ENCODE measurements at regions of chr3 and their contacts with region 1.

Region 1: GRCh38 chr3:42387802-42388651 is 22.4 kb downstream of the LYZL4 start:
- DNase-seq: peak in 12 of 14 experiments; percentile 7 to 52 (median 38)
- ATAC-seq: peak; percentile 95
- H3K4me3 ChIP-seq: no peak overlapping the region
- H3K4me3 Mint-ChIP-seq: peak overlapping the region; percentile 78
- H3K27ac ChIP-seq: peak overlapping the region; percentile 46 to 63
- H3K27ac Mint-ChIP-seq: peak overlapping the region; percentile 94
- H3K4me1 ChIP-seq: peaks cover 25% of the 10 kb centered on the region
- H3K4me1 Mint-ChIP-seq: peaks cover 37% of the 10 kb centered on the region
- H3K27me3 ChIP-seq: no peaks in the 10 kb centered on the region
- H3K27me3 Mint-ChIP-seq: no peaks in the 10 kb centered on the region
- CTCF ChIP-seq: no peak

Region 2: DNA sequence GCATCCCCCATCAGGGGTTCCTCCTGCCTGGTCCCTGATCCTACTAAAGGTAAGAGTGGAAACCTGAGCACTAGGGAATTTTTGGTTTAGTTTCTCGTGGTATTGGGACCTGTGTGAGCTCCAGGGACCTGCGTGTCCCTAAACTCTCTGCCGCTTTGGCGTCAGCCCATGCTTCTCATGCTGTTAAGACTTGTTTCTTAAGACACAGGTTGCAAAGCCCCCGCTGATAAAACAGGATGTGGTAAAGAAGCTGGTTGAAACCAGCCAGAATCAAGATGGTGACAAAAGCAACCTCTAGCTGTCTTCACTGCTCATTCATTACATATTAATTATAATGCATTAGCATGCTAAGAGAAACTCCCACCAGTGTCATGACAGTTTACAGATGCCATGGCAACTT is 42.2 kb before region 1 on chr3:
- CTCF ChIA-PET with region 1: no interaction called
- POLR2A ChIA-PET with region 1: interaction called, 22 read pairs
- intact Hi-C with region 1: no loop called
- DNase-seq: peak in 6 of 14 experiments; percentile 17 to 38 (median 28)
- ATAC-seq: peak; percentile 67
- H3K4me3 ChIP-seq: no peak overlapping the region
- H3K4me3 Mint-ChIP-seq: peak overlapping the region; percentile 62
- H3K27ac ChIP-seq: no peak overlapping the region
- H3K27ac Mint-ChIP-seq: peak overlapping the region; percentile 84
- H3K4me1 ChIP-seq: peaks cover 25% of the 10 kb centered on the region
- H3K4me1 Mint-ChIP-seq: peaks cover 35% of the 10 kb centered on the region
- H3K27me3 ChIP-seq: peaks cover 0 to under 1% of the 10 kb centered on the region in 2 experiments
- H3K27me3 Mint-ChIP-seq: no peaks in the 10 kb centered on the region
- CTCF ChIP-seq: no peak